Mammary epithelial cell (primary cell): ENCODE measurements at regions of chr13 and their contacts with region 1.

Region 1: GRCh38 chr13:50801087-50801931 is 42.2 kb downstream of the DLEU7 start:
- DNase-seq: peak; percentile 58
- H3K4me3 ChIP-seq: no peak overlapping the region
- H3K27ac ChIP-seq: no peak overlapping the region
- H3K4me1 ChIP-seq: peaks cover 11% of the 10 kb centered on the region
- H3K27me3 ChIP-seq: no peaks in the 10 kb centered on the region
- CTCF ChIP-seq: peak; percentile 81 to 82

Region 2: DNA sequence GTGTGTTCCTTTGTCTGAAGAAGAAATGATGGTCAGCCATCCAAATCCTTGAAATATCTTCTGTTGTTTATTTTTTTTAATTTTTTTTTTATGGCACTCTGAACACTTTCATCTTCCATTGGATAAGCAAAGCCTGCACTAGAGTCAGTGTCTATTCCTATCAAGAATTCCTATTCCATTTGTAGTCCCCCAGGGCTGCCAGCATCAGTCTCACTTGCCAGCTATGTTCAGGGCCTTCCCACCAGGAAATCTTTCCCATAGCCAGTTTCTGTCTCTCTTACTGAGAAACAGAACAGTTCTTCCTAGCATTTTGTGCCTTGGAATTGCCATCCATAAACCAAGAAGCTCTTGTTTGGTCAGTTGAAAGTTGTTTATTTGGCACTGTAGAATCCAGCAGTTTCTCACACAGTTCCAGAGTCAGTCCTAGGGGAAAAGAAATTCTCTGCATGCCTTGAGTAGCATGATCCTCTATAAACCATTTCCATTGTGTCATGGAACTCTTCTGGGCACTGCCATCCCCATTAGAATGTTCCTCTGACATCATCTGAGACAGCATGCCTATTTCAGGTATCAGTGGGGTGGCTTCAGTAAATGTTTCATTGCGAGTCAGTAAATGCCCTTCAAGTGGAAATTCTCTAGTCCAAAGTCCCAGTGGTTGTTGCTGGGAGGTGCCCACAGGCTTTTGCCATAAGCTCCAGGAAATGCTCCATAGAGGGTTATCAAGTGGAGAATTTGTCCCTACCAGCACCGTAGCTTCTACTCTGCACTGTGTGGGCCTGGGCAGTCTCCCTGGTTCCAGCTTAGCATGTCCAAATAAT is 846.4 kb before region 1 on chr13:
- CTCF ChIA-PET with region 1: no interaction called
- dilution Hi-C with region 1: no loop called
- in situ Hi-C with region 1: loop called in 1 of 2 experiments (anchors 25 kb)
- intact Hi-C with region 1: no loop called
- DNase-seq: peak; percentile 9
- H3K4me3 ChIP-seq: no peak overlapping the region
- H3K27ac ChIP-seq: no peak overlapping the region
- H3K4me1 ChIP-seq: no peaks in the 10 kb centered on the region
- H3K27me3 ChIP-seq: no peaks in the 10 kb centered on the region
- CTCF ChIP-seq: no peak

Region 3: GRCh38 chr13:49996951-49997895 is 804.1 kb before region 1 on chr13 and contains the start of gene TRIM13:
- CTCF ChIA-PET with region 1: no interaction called
- dilution Hi-C with region 1: no loop called
- in situ Hi-C with region 1: loop called in 1 of 2 experiments (anchors 25 kb)
- intact Hi-C with region 1: loop called (anchors 5 kb)
- DNase-seq: peak; percentile 79
- H3K4me3 ChIP-seq: peak within 1 kb of the TSS; percentile 69 to 85 (median 79)
- H3K27ac ChIP-seq: peak within 1 kb of the TSS; percentile 79
- H3K4me1 ChIP-seq: peaks cover 13% of the 10 kb centered on the region
- H3K27me3 ChIP-seq: no peaks in the 10 kb centered on the region
- CTCF ChIP-seq: peak; percentile 58 to 86
- total RNA-seq, gene TRIM13: 17.9 to 21.0 TPM

Region 4: DNA sequence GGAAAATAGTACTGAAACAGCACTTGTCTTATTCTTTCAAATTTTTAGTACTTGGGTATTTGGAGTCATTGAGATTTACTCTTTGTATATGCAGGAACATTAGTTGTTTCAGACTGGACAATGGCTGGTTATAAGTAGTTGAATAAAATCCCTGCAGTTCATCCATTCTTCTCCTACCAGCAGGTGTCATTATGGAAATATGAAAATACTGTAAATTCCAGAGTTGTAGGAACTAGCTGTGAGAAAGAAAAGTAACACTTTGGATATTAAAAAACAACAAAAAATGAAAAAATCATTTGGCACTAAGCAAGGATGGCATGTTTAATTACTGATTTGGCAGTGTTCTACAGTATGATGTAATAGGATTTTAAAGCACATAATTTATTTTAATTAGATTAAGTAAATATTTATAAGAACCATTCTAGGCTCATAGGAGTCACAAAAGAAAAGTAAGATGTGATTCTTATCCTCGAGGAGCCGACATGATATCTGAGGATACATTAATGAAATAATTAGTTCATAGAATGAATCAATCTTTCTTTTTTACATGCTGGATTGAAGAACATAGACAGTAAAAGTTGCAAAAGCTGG is 630.8 kb before region 1 on chr13:
- CTCF ChIA-PET with region 1: no interaction called
- dilution Hi-C with region 1: no loop called
- in situ Hi-C with region 1: no loop called
- intact Hi-C with region 1: loop called (anchors 1 kb)
- DNase-seq: peak; percentile 26
- H3K4me3 ChIP-seq: no peak overlapping the region
- H3K27ac ChIP-seq: no peak overlapping the region
- H3K4me1 ChIP-seq: no peaks in the 10 kb centered on the region
- H3K27me3 ChIP-seq: no peaks in the 10 kb centered on the region
- CTCF ChIP-seq: peak in 1 of 2 donors; percentile 47

Region 5: DNA sequence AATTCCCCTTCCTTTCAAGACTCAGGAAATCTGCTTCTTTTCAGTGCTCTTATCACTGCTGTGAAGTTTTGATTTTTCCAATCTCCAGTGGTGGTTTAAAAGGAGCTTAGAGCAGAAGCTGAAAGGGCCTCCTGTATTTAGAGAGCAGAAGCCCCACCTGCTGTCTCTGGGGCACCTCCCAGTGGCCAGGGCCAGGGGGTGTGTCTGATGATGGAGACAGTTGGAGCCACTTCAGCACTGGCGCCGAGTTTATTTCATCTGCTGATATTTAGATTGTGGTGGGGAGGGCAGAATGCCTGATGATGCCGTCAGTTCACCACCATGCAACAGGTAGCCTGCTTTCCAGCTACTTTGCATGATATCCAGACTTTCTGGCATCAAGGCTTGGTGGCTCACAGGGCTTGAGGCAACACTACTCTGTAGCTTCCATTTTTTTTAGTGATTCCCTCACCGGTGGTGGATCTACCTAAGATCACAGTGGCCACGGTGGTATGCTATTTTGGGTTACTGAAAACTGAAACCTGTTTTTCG is 414.2 kb before region 1 on chr13:
- CTCF ChIA-PET with region 1: no interaction called
- dilution Hi-C with region 1: loop called (anchors 25 kb)
- in situ Hi-C with region 1: no loop called
- intact Hi-C with region 1: no loop called
- DNase-seq: no peak
- H3K4me3 ChIP-seq: no peak overlapping the region
- H3K27ac ChIP-seq: no peak overlapping the region
- H3K4me1 ChIP-seq: no peaks in the 10 kb centered on the region
- H3K27me3 ChIP-seq: no peaks in the 10 kb centered on the region
- CTCF ChIP-seq: peak in 1 of 2 donors; percentile 2

Region 6: GRCh38 chr13:50589139-50589538 is 212.2 kb before region 1 on chr13:
- CTCF ChIA-PET with region 1: no interaction called
- dilution Hi-C with region 1: no loop called
- in situ Hi-C with region 1: no loop called
- intact Hi-C with region 1: loop called (anchors 1 kb)
- DNase-seq: peak; percentile 90
- H3K4me3 ChIP-seq: no peak overlapping the region
- H3K27ac ChIP-seq: peak overlapping the region; percentile 53
- H3K4me1 ChIP-seq: peaks cover 45% of the 10 kb centered on the region
- H3K27me3 ChIP-seq: no peaks in the 10 kb centered on the region
- CTCF ChIP-seq: no peak

Region 7: DNA sequence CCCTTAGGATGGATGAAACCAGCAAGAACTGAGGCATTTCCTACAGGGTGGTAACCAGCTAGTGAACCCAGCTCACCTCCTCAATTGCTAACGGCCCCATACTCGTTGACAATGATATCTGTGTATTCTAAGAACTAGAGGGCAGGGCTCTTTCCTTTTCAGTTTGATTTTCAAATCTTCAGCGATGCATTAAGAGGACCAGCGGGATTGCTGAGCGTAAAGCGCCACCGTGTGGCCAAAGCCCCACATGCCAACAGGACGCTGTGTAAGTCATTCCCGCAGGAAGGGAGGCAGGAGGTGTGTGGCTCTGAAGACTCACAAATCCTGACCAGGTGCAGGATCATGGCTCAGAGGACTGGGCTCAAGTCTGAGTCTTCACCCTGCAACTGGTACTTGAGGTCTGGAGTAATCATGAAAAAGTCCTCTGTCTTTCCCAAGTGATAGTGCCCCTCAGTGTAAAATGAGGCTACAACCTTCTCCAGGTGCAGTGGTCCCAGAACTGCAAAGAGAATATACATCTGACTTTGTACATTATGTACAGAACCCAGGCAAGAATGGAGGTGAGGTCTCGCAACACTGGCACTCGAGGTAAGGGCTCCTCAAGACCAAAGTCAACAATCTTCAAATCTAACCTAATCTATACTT is 268.8 kb after region 1 on chr13:
- CTCF ChIA-PET with region 1: no interaction called
- dilution Hi-C with region 1: no loop called
- in situ Hi-C with region 1: loop called in 1 of 2 experiments (anchors 25 kb)
- intact Hi-C with region 1: loop called (anchors 2 kb)
- DNase-seq: peak; percentile 64
- H3K4me3 ChIP-seq: no peak overlapping the region
- H3K27ac ChIP-seq: no peak overlapping the region
- H3K4me1 ChIP-seq: peaks cover 19% of the 10 kb centered on the region
- H3K27me3 ChIP-seq: peaks cover 2% of the 10 kb centered on the region
- CTCF ChIP-seq: peak; percentile 97 to 98